HepG2 (cell line): ENCODE measurements at regions of chr6 and their contacts with region 1.

Region 1: DNA sequence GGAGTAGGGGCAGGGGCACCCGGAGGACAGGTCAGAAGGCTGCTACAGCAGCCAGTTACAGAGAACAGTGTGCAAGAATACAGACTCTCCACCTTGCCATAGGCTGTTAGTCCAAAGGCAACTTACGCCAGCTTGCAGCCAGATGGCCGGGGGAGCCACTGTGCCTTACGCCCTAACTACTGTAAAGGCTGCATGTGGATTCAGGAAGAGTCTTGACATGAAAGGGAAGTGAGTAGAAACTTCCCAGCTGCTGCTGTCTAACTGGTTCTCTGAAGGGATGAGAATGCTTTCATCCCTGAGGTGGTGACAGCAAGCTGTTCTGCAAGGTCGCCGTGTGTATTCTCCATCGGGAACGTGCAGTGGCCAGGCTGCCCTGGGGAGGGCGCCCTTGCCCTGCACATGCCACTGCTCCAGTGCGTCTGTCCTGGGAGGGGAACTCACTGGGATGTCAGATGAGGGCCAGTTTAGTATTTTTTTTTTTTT is 46.1 kb downstream of the LYRM4 start:
- DNase-seq: peak; percentile 25
- ATAC-seq: peak; percentile 98
- H3K4me3 ChIP-seq: no peak overlapping the region
- H3K27ac ChIP-seq: no peak overlapping the region
- H3K4me1 ChIP-seq: no peaks in the 10 kb centered on the region
- H3K27me3 ChIP-seq: no peaks in the 10 kb centered on the region
- CTCF ChIP-seq: peak; percentile 95
- EP300 ChIP-seq: no peak
- POLR2A ChIP-seq: no peak
- RAD21 ChIP-seq: peak; percentile 91

Region 2: DNA sequence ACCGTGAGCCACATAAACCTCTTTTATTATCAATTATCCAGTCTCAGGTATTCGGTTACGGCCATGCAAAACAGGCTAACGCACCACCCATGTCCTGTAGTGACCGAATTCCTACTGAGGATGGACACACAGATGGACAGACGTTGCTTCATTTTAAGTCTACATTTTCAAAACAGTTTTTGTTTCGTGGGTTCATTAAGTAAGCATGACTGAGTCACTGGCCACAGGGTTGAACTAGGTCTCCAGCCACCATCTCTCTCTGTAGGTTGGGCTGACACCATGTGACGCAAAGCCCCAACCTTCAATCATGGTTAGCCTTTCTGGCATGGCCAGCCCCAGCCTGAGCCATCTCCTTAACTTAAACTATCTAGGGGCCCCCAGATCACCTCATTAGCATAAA is 1647.8 kb before region 1 on chr6:
- CTCF ChIA-PET with region 1: no interaction called
- POLR2A ChIA-PET with region 1: no interaction called
- in situ Hi-C with region 1: no loop called
- intact Hi-C with region 1: no loop called
- DNase-seq: no peak
- ATAC-seq: no peak
- H3K4me3 ChIP-seq: no peak overlapping the region
- H3K27ac ChIP-seq: no peak overlapping the region
- H3K4me1 ChIP-seq: peaks cover 18% of the 10 kb centered on the region
- H3K27me3 ChIP-seq: peaks cover 0 to 21% of the 10 kb centered on the region in 2 experiments; a peak in 3 of 5 replicates
- CTCF ChIP-seq: no peak
- EP300 ChIP-seq: no peak
- POLR2A ChIP-seq: no peak
- RAD21 ChIP-seq: no peak

Region 3: DNA sequence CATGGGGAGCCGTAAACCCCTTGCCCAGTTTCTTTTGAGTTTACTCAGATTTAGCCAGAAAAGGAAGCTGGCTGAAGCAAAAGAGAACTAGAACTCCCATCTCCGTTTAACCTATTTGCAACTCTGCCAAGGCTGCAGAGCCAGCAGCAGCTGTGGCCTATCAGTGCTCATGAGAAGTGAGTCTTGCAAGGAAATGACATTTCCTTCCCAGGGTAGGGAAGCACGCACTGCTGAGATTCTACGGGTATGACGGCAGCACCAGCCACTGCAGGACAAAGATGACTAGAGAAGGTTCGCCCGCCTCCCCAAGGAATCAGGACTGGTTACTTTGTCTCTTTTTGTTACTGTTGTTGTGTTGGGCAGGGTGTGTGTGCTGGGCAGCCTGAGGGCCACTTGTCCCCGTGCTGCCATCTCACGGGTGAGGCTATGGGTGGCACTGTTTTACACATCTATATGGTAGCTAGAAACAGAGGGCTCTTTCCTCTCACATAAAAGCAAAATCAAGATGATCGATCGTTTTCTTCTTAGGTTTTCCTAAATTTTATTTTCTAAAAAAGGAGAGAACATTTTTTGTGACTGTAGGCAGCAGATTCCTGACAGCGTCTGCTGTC is 81.8 kb before region 1 on chr6:
- CTCF ChIA-PET with region 1: no interaction called
- POLR2A ChIA-PET with region 1: no interaction called
- in situ Hi-C with region 1: no loop called
- intact Hi-C with region 1: no loop called
- DNase-seq: no peak
- ATAC-seq: no peak
- H3K4me3 ChIP-seq: no peak overlapping the region
- H3K27ac ChIP-seq: no peak overlapping the region
- H3K4me1 ChIP-seq: no peaks in the 10 kb centered on the region
- H3K27me3 ChIP-seq: no peaks in the 10 kb centered on the region
- CTCF ChIP-seq: no peak
- EP300 ChIP-seq: no peak
- POLR2A ChIP-seq: no peak
- RAD21 ChIP-seq: no peak

Region 4: GRCh38 chr6:5230081-5230480 is 15.5 kb after region 1 on chr6:
- CTCF ChIA-PET with region 1: no interaction called
- POLR2A ChIA-PET with region 1: no interaction called
- in situ Hi-C with region 1: no loop called
- intact Hi-C with region 1: no loop called
- DNase-seq: no peak
- ATAC-seq: no peak
- H3K4me3 ChIP-seq: no peak overlapping the region
- H3K27ac ChIP-seq: no peak overlapping the region
- H3K4me1 ChIP-seq: peaks cover 35% of the 10 kb centered on the region
- H3K27me3 ChIP-seq: no peaks in the 10 kb centered on the region
- CTCF ChIP-seq: no peak
- EP300 ChIP-seq: no peak
- POLR2A ChIP-seq: no peak
- RAD21 ChIP-seq: no peak

Region 5: DNA sequence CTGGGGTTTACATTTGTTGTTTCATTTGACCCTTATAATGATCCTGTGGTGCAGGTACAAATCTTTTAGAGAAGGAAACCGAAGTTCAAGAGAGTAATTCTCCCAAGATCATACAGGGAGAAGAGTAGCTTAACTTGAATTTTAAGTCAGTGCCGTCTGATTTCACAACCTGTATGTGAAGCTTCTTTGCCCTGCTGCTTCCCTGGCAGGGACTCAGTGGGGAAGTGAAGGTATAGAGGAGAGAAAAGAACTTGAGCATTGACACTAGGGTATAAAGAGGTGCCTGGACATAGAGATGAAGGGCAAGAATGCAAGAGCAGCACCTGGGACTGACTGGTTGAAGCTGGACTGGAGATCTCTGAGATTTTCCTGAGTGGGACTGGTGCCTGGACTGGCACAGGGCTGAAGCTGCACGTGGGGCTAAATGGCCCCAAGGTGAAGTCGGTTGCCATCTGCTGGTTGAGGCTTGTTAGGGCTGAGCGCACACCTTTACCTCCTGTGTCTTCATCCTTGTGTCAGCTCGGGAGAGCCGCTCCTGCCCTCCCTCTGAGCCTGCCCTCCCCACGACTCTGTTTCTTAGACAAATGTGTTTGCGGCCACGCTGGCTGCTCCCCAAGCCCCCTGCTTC is 88.5 kb after region 1 on chr6:
- CTCF ChIA-PET with region 1: interaction called, 19 read pairs
- POLR2A ChIA-PET with region 1: no interaction called
- in situ Hi-C with region 1: loop called (anchors 5 kb)
- intact Hi-C with region 1: loop called (anchors 2 kb)
- DNase-seq: peak; percentile 73
- ATAC-seq: peak; percentile 100
- H3K4me3 ChIP-seq: no peak overlapping the region
- H3K27ac ChIP-seq: no peak overlapping the region
- H3K4me1 ChIP-seq: peaks cover 16% of the 10 kb centered on the region
- H3K27me3 ChIP-seq: no peaks in the 10 kb centered on the region
- CTCF ChIP-seq: peak; percentile 88
- EP300 ChIP-seq: no peak
- POLR2A ChIP-seq: no peak
- RAD21 ChIP-seq: peak; percentile 83

Region 6: DNA sequence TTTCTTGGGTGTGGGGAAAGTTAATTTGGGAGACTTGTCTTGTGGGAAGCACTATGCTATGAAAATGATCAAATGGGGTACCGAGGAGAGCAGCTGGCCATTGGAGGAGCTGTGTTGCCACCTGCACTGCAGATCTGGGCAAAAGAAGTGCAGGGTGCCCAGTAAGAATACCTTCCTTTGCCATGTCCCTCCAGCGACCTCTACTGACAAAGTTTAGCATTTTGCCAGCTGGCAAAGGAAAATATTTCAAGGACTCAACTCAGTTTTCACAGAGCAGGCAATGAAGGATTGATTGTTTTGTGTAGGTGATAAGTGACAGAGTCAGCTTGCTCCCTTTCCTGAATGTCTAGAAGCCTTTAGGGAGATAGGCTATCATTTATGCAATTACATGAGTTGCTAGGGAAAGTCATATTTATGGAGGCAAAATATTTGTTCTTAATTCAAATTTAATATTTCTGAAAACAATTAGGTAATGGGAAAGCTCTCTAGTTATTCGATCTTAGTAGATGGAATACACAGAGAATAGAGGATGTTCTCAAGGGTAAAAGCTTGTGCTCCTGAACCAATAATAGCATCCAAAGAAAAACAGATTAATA is 165.1 kb after region 1 on chr6:
- CTCF ChIA-PET with region 1: interaction called, 15 read pairs
- POLR2A ChIA-PET with region 1: no interaction called
- in situ Hi-C with region 1: no loop called
- intact Hi-C with region 1: loop called (anchors 1 kb)
- DNase-seq: peak; percentile 71
- ATAC-seq: peak; percentile 80
- H3K4me3 ChIP-seq: no peak overlapping the region
- H3K27ac ChIP-seq: no peak overlapping the region
- H3K4me1 ChIP-seq: no peaks in the 10 kb centered on the region
- H3K27me3 ChIP-seq: no peaks in the 10 kb centered on the region
- CTCF ChIP-seq: peak; percentile 90
- EP300 ChIP-seq: no peak
- POLR2A ChIP-seq: no peak
- RAD21 ChIP-seq: peak; percentile 73

Region 7: DNA sequence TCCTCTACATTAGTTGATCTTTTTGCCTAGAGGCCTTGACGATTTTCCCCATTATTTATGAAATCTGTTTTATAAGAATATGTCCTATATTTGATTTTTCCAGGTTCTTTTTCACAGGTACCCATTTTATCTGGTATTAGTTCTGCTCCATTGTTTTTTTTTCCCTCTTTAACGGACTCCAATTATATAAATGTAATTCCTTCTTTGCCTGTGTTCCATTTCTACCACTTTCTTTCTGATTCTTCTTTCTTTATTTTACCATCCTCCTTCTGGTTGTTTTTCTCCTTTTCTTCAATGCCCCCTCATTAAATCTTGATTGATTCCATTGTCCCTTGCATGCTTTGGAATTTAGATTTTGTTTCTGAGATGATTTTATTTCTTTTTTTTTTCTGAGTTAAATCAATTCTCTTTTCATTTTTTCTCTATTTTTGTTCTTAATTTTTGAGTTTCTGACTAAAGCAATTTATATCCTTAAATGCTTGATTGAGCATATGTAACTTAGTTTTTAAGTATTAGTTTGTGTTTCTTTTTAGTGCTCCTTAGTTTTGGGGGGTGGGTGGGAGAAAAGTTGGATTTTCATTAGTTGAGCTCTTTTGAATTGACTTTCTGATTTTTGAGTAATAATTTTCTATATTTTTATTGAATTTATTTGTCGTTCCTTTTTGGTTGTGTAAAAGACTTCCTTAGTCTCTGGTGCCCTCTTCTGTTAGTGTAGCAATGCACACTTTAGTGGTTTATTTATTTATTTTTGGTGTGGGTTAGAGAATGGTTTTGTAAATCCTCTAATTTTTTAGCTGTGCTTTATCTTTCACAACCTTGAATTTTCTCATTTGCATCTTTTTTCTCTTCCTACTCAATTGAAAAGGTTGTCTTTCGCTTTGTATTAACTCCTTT is 187.5 kb after region 1 on chr6:
- CTCF ChIA-PET with region 1: interaction called, 7 read pairs
- POLR2A ChIA-PET with region 1: no interaction called
- in situ Hi-C with region 1: no loop called
- intact Hi-C with region 1: loop called (anchors 2 kb)
- DNase-seq: peak; percentile 19
- ATAC-seq: no peak
- H3K4me3 ChIP-seq: no peak overlapping the region
- H3K27ac ChIP-seq: no peak overlapping the region
- H3K4me1 ChIP-seq: no peaks in the 10 kb centered on the region
- H3K27me3 ChIP-seq: no peaks in the 10 kb centered on the region
- CTCF ChIP-seq: peak; percentile 41; the same call in 1 of the 2 replicates
- EP300 ChIP-seq: no peak
- POLR2A ChIP-seq: no peak
- RAD21 ChIP-seq: no peak